Activated CD4-positive, alpha-beta T cell treated with anti-CD3 and anti-CD28 coated beads, Interleukin-2, amount 10 ng/mL, durations not matched to agents 7 days and 5 days (primary cell): ENCODE measurements at regions of chr17 and their contacts with region 1.

Region 1: GRCh38 chr17:28030386-28030785 is 12.1 kb upstream of the NLK start:
- DNase-seq: no peak
- H3K4me3 Mint-ChIP-seq: no peak overlapping the region
- H3K27ac Mint-ChIP-seq: no peak overlapping the region
- H3K4me1 Mint-ChIP-seq: peaks cover 7% of the 10 kb centered on the region
- H3K27me3 Mint-ChIP-seq: no peaks in the 10 kb centered on the region

Region 2: GRCh38 chr17:28041068-28041843 is 10.9 kb after region 1 on chr17:
- CTCF ChIA-PET with region 1: interaction called, 3 read pairs
- POLR2A ChIA-PET with region 1: interaction called, 12 read pairs
- DNase-seq: peak; percentile 99
- H3K4me3 Mint-ChIP-seq: peak overlapping the region; percentile 81
- H3K27ac Mint-ChIP-seq: peak overlapping the region; percentile 85
- H3K4me1 Mint-ChIP-seq: peaks cover 56% of the 10 kb centered on the region
- H3K27me3 Mint-ChIP-seq: peaks cover 5% of the 10 kb centered on the region

Region 3: GRCh38 chr17:28065706-28066105 is 35.3 kb after region 1 on chr17:
- CTCF ChIA-PET with region 1: no interaction called
- POLR2A ChIA-PET with region 1: no interaction called
- DNase-seq: no peak
- H3K4me3 Mint-ChIP-seq: no peak overlapping the region
- H3K27ac Mint-ChIP-seq: no peak overlapping the region
- H3K4me1 Mint-ChIP-seq: peaks cover 15% of the 10 kb centered on the region
- H3K27me3 Mint-ChIP-seq: no peaks in the 10 kb centered on the region